Activated naive CD4-positive, alpha-beta T cell treated with anti-CD3 and anti-CD28 coated beads for 36 hours (primary cell): ENCODE measurements at regions of chr18 and their contacts with region 1.

Region 1: GRCh38 chr18:9136315-9137155 is at the start of gene ANKRD12:
- DNase-seq: peak; percentile 96
- H3K4me3 Mint-ChIP-seq: peak within 1 kb of the TSS; percentile 96
- H3K27ac Mint-ChIP-seq: peak within 1 kb of the TSS; percentile 97
- H3K4me1 Mint-ChIP-seq: peaks cover 63% of the 10 kb centered on the region
- H3K27me3 Mint-ChIP-seq: no peaks in the 10 kb centered on the region
- total RNA-seq, gene ANKRD12: 37.5 to 40.0 TPM

Region 2: DNA sequence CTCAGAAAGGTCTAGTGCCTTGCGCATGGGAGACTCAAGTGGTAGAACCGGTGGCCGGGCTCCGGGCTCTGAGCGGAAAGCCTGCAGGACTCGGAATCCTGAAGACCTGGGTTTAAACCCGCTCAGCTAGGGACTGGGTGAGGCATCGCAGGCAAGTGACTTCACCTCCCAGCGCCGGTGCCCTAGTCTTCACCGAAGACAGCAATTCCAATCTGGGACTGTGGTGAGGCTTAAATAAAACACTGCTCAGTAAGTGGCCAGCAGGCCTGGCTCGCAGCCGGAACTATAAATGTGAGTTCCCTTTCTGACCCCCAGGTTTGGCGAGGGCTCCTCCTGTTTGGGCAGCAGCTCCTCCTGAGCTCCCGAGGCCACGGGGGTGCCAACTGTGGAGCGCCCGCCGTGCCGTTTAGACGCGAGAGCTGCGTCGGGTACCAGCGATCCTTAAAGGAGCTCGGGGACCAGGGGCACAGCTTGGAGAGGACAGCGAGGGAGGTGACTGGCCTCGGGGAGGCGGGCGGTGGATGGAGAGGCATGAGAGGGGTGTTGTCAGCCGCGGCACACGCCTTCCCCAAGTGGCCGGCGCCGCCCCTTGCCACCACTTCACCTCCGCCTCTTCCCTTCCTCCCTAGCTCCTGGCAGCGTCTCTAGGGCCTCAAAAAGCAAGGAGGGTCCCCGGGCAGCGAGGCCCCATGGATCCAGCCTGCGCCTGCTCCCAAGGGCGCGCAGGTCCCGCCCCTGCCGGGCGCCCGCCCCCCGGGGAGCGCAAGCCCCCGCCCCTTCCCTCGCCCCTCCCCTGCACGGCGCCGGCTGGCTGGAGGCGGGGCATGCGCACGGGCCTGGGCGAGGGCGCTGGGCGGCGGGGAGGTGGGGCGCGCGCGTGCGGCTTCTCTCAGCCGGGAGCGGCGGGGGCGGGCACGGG is 431.9 kb before region 1 on chr18:
- CTCF ChIA-PET with region 1: no interaction called
- intact Hi-C with region 1: loop called (anchors 2 kb)
- DNase-seq: peak; percentile 82
- H3K4me3 Mint-ChIP-seq: peak overlapping the region; percentile 80
- H3K27ac Mint-ChIP-seq: no peak overlapping the region
- H3K4me1 Mint-ChIP-seq: peaks cover 12% of the 10 kb centered on the region
- H3K27me3 Mint-ChIP-seq: peaks cover 45% of the 10 kb centered on the region

Region 3: DNA sequence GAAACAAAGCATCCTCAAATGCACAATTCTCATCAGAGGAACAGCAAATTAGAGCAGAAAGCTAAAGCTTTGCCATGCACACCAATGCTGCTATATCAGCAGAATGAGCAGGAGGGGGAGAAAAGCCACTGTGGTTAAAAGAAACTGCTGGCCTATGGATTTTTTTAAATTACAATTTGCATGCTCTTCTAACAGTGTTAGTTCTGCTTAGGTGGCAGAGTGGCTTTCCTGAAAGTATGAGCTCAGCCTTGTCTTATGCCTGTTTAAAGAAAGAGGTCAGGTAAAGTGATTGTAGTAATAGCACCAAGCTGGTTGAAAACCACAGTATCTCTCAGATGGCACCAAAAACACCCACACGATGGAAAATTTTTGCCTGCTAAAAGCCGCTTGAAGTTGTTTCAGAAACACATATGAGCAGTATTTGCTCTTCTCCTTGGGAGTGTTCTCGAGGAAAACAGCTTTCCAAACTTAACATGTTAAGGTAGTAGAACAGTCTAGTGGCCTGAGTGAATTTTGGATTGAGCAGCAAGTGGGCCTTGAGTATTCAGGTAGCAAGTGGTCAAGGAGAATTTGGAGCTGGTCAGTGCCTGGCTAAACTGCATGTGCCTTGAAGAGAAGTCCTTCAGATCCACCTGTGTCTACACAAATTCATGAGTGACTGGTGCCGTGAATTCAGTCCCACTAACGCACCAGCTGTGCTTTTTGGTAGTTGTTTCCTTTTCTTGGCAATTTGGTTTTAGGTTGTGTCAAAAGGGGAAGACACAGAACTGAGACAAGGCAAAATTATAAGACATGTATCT is 53.6 kb before region 1 on chr18:
- CTCF ChIA-PET with region 1: interaction called, 6 read pairs
- intact Hi-C with region 1: loop called (anchors 1 kb)
- DNase-seq: peak; percentile 82
- H3K4me3 Mint-ChIP-seq: peak overlapping the region; percentile 67
- H3K27ac Mint-ChIP-seq: peak overlapping the region; percentile 92
- H3K4me1 Mint-ChIP-seq: peaks cover 30% of the 10 kb centered on the region
- H3K27me3 Mint-ChIP-seq: no peaks in the 10 kb centered on the region

Region 4: DNA sequence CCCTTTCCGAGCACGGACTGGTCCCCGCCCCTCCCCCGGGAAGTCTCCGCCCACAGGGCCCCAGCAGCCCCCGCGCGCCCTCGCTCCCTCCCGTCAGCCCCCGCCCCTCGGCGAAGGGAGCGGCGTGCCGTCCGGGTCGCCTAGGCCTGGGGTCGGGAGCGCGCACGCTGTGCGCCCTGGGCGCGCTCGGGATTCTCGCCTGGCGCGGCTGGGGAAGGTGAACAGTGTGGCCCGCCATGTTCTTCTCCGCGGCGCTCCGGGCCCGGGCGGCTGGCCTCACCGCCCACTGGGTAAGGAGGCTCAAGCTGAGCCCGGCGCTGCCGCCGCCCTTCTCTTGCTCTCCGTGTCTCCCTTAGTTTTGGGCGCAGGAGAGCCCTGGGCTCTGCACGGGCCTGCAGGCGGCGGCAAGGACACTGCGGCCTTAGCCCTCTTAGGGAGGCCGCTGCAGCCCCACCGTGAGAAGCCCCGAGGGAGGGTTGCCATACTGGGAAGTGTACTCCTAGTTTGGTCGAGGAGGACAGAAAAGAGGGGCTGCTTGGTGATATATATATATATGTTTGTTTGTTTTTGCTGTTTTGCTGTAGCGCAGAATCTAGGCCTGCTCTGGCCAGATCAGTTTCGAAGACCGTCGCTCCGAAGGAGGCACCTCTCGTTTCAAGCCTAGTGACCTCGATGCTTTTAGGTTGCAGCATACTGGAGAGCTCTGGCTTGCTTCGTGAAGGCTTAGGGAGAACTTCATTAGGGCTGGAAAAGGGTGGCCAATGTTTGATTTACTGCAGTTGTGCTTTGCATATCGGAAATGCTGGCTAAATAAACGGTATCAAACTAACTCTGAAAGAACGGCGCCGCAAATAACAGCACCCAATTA is 33.8 kb before region 1 on chr18 and contains the start of gene NDUFV2:
- CTCF ChIA-PET with region 1: interaction called, 13 read pairs
- intact Hi-C with region 1: loop called (anchors 1 kb)
- DNase-seq: peak; percentile 98
- H3K4me3 Mint-ChIP-seq: peak within 1 kb of the TSS; percentile 81
- H3K27ac Mint-ChIP-seq: peak within 1 kb of the TSS; percentile 95
- H3K4me1 Mint-ChIP-seq: peaks cover 43% of the 10 kb centered on the region
- H3K27me3 Mint-ChIP-seq: no peaks in the 10 kb centered on the region
- total RNA-seq, gene NDUFV2: 290 to 303 TPM

Region 5: GRCh38 chr18:9117980-9118841 is 18.3 kb before region 1 on chr18:
- CTCF ChIA-PET with region 1: interaction called, 10 read pairs
- intact Hi-C with region 1: loop called (anchors 1 kb)
- DNase-seq: no peak
- H3K4me3 Mint-ChIP-seq: peak overlapping the region; percentile 57
- H3K27ac Mint-ChIP-seq: peak overlapping the region; percentile 98
- H3K4me1 Mint-ChIP-seq: peaks cover 81% of the 10 kb centered on the region
- H3K27me3 Mint-ChIP-seq: no peaks in the 10 kb centered on the region

Region 6: GRCh38 chr18:9290156-9290555 is 153.6 kb after region 1 on chr18:
- CTCF ChIA-PET with region 1: no interaction called
- intact Hi-C with region 1: no loop called
- DNase-seq: no peak
- H3K4me3 Mint-ChIP-seq: no peak overlapping the region
- H3K27ac Mint-ChIP-seq: no peak overlapping the region
- H3K4me1 Mint-ChIP-seq: no peaks in the 10 kb centered on the region
- H3K27me3 Mint-ChIP-seq: no peaks in the 10 kb centered on the region